BJ (cell line): ENCODE measurements at regions of chr4 and their contacts with region 1.

Region 1: GRCh38 chr4:81040012-81040659 is 9.6 kb downstream of the BMP3 start:
- DNase-seq: no peak
- H3K4me3 ChIP-seq: no peak overlapping the region
- H3K27me3 ChIP-seq: no peaks in the 10 kb centered on the region
- CTCF ChIP-seq: peak; percentile 69

Region 2: GRCh38 chr4:80365928-80366327 is 674.2 kb before region 1 on chr4:
- CTCF ChIA-PET with region 1: interaction called, 25 read pairs
- POLR2A ChIA-PET with region 1: no interaction called
- DNase-seq: no peak
- H3K4me3 ChIP-seq: no peak overlapping the region
- H3K27me3 ChIP-seq: no peaks in the 10 kb centered on the region
- CTCF ChIP-seq: peak; percentile 78

Region 3: GRCh38 chr4:80948141-80948540 is 92.0 kb before region 1 on chr4:
- CTCF ChIA-PET with region 1: no interaction called
- POLR2A ChIA-PET with region 1: no interaction called
- DNase-seq: peak; percentile 47
- H3K4me3 ChIP-seq: no peak overlapping the region
- H3K27me3 ChIP-seq: no peaks in the 10 kb centered on the region
- CTCF ChIP-seq: no peak

Region 4: GRCh38 chr4:81052119-81053068 is 12.3 kb after region 1 on chr4:
- CTCF ChIA-PET with region 1: interaction called, 42 read pairs
- POLR2A ChIA-PET with region 1: interaction called, 5 read pairs
- DNase-seq: no peak
- H3K4me3 ChIP-seq: no peak overlapping the region
- H3K27me3 ChIP-seq: no peaks in the 10 kb centered on the region
- CTCF ChIP-seq: peak; percentile 76

Region 5: GRCh38 chr4:81272671-81273070 is 232.5 kb after region 1 on chr4:
- CTCF ChIA-PET with region 1: no interaction called
- POLR2A ChIA-PET with region 1: no interaction called
- DNase-seq: no peak
- H3K4me3 ChIP-seq: no peak overlapping the region
- H3K27me3 ChIP-seq: no peaks in the 10 kb centered on the region
- CTCF ChIP-seq: no peak